ENCODE measurements at regions of chr16 and their contacts with region 1.

Region 1: GRCh38 chr16:15650019-15650697 is at the start of gene NDE1:
- DNase-seq: peak; percentile 93
- H3K4me3 ChIP-seq: peak within 1 kb of the TSS; percentile 77 to 98 (median 83)
- H3K27ac ChIP-seq: peak within 1 kb of the TSS; percentile 57
- H3K4me1 ChIP-seq: peaks cover 14% of the 10 kb centered on the region
- H3K27me3 ChIP-seq: peaks cover 0 to 2% of the 10 kb centered on the region in 2 experiments
- CTCF ChIP-seq: no peak
- POLR2A ChIP-seq: peak; percentile 78
- total RNA-seq, gene NDE1: 89.1 and 90.2 TPM in 2 replicates

Region 2: DNA sequence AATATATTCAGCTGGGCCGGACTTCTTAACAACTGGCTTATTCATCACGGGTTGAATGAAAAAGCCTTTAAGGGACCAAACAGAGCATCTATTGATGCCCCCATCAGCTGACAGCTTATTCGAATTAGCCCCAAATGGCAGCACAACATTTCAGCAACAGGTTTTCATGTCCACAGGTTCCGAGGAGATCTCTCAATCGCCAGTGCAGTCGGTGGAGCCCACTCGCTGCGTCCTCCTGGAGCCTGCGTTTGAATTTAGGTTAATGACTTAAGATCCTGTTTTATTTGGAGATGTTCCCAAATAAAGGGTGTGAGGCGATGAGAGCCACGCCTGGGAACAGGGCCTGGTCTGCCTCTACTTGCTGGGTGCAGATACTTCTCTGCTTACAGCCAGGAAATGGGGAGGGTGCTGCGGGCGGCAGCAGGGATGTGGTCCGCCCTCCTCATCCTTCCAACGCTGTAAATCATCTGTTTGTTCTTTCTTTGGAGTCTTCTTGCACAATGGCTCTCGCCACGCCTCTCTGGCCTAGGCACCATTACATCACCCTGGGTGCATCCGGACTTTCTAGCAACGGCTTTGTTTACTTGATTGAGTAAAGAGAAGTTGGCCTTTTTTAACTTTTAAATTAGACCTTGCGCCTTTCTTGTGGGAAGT is 22.5 kb after region 1 on chr16:
- CTCF ChIA-PET with region 1: interaction called, 7 read pairs
- POLR2A ChIA-PET with region 1: interaction called, 3 read pairs
- dilution Hi-C with region 1: no loop called
- intact Hi-C with region 1: loop called (anchors 1 kb)
- DNase-seq: peak; percentile 99
- H3K4me3 ChIP-seq: peak overlapping the region in 1 of 3 experiments; percentile 26
- H3K27ac ChIP-seq: peak overlapping the region; percentile 99
- H3K4me1 ChIP-seq: peaks cover 21% of the 10 kb centered on the region
- H3K27me3 ChIP-seq: no peaks in the 10 kb centered on the region
- CTCF ChIP-seq: no peak
- POLR2A ChIP-seq: peak; percentile 77

Region 3: GRCh38 chr16:15704545-15704987 is 54.4 kb after region 1 on chr16:
- CTCF ChIA-PET with region 1: interaction called, 3 read pairs
- POLR2A ChIA-PET with region 1: no interaction called
- dilution Hi-C with region 1: no loop called
- intact Hi-C with region 1: loop called (anchors 2 kb)
- DNase-seq: peak; percentile 73
- H3K4me3 ChIP-seq: no peak overlapping the region
- H3K27ac ChIP-seq: no peak overlapping the region
- H3K4me1 ChIP-seq: peaks cover 28% of the 10 kb centered on the region
- H3K27me3 ChIP-seq: no peaks in the 10 kb centered on the region
- CTCF ChIP-seq: peak; percentile 79 to 87
- POLR2A ChIP-seq: no peak

Region 4: GRCh38 chr16:15726715-15727114 is 76.6 kb after region 1 on chr16:
- CTCF ChIA-PET with region 1: no interaction called
- POLR2A ChIA-PET with region 1: no interaction called
- dilution Hi-C with region 1: no loop called
- intact Hi-C with region 1: no loop called
- DNase-seq: no peak
- H3K4me3 ChIP-seq: no peak overlapping the region
- H3K27ac ChIP-seq: no peak overlapping the region
- H3K4me1 ChIP-seq: no peaks in the 10 kb centered on the region
- H3K27me3 ChIP-seq: no peaks in the 10 kb centered on the region
- CTCF ChIP-seq: no peak
- POLR2A ChIP-seq: no peak

Region 5: DNA sequence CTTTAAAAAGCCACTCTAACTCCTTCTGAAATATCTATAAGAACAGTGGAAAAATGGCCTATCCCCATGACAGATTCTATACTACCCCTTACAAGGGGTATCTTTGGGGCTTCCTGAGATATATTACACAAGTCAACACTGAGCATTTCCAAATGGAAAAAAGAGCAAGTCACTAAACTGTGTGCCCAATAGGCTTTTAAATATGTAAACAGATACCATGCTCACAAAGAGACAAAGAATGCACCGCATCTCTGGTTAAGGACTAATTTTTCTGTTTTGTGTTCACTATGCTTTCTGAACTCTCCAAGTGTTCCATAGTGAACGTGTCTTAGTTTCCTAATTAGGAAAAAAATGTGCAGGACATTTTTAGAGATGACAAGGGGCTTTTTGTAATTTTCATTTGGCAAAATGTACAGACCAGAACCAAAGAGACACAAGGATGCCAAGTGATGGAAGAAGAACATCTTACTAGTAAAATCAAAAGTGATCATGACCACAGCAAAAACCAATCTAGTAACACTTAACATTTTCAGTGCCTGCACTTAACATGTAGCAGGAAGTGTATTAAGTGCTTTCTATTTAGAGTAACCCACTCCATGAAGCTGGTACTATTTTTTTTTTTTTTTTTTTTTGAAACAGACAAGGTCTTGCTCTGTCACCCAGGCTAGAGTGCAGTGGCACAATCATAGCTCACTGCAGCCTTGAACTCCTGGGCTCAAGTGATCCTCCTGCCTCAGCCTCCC is 185.1 kb after region 1 on chr16:
- CTCF ChIA-PET with region 1: no interaction called
- POLR2A ChIA-PET with region 1: no interaction called
- dilution Hi-C with region 1: no loop called
- intact Hi-C with region 1: no loop called
- DNase-seq: no peak
- H3K4me3 ChIP-seq: no peak overlapping the region
- H3K27ac ChIP-seq: no peak overlapping the region
- H3K4me1 ChIP-seq: no peaks in the 10 kb centered on the region
- H3K27me3 ChIP-seq: no peaks in the 10 kb centered on the region
- CTCF ChIP-seq: no peak
- POLR2A ChIP-seq: no peak